CD4-positive, alpha-beta memory T cell (primary cell): ENCODE measurements at regions of chr1 and their contacts with region 1.

Region 1: GRCh38 chr1:201895913-201896807 is 7.5 kb downstream of the SHISA4 start:
- DNase-seq: peak; percentile 72 to 83 (median 75)
- H3K4me3 ChIP-seq: no peak overlapping the region
- H3K4me3 Mint-ChIP-seq: peak overlapping the region in 7 of 8 donors; percentile 28 to 74 (median 68)
- H3K27ac ChIP-seq: no peak overlapping the region
- H3K27ac Mint-ChIP-seq: peak overlapping the region; percentile 10 to 90 (median 74)
- H3K4me1 ChIP-seq: peaks cover 7% of the 10 kb centered on the region
- H3K4me1 Mint-ChIP-seq: peaks cover 5 to 7% (median 6%) of the 10 kb centered on the region in 4 donors
- H3K27me3 ChIP-seq: peaks cover under 1% of the 10 kb centered on the region
- H3K27me3 Mint-ChIP-seq: peaks cover 9 to 29% of the 10 kb centered on the region in 2 donors

Region 2: GRCh38 chr1:201748335-201748734 is 147.8 kb before region 1 on chr1:
- CTCF ChIA-PET with region 1: no interaction called
- POLR2A ChIA-PET with region 1: no interaction called
- intact Hi-C with region 1: no loop called
- DNase-seq: no peak
- H3K4me3 ChIP-seq: no peak overlapping the region
- H3K4me3 Mint-ChIP-seq: no peak overlapping the region
- H3K27ac ChIP-seq: no peak overlapping the region
- H3K27ac Mint-ChIP-seq: no peak overlapping the region
- H3K4me1 ChIP-seq: no peaks in the 10 kb centered on the region
- H3K4me1 Mint-ChIP-seq: peaks cover 2 to 12% (median 9%) of the 10 kb centered on the region in 4 donors
- H3K27me3 ChIP-seq: no peaks in the 10 kb centered on the region
- H3K27me3 Mint-ChIP-seq: peaks cover 2 to 3% of the 10 kb centered on the region in 2 donors

Region 3: DNA sequence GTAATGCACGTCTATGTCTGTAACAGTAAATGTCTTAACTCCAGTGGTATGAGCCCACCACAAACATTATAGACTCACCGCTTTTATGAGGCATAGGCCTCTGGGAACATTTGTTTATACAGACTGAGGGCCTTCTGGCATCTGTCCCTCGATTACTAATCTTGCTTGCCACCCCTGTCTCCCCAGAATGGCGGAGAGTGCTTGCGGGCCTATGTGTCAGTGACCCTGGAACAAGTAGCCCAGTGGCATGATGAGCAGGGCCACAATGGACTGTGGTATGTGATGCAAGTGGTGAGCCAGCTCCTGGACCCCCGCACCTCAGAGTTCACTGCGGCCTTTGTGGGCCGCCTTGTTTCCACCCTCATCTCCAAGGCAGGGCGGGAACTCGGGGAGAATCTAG is 25.8 kb before region 1 on chr1:
- CTCF ChIA-PET with region 1: interaction called, 11 read pairs
- POLR2A ChIA-PET with region 1: no interaction called
- intact Hi-C with region 1: no loop called
- DNase-seq: no peak
- H3K4me3 ChIP-seq: no peak overlapping the region
- H3K4me3 Mint-ChIP-seq: no peak overlapping the region
- H3K27ac ChIP-seq: no peak overlapping the region
- H3K27ac Mint-ChIP-seq: no peak overlapping the region
- H3K4me1 ChIP-seq: no peaks in the 10 kb centered on the region
- H3K4me1 Mint-ChIP-seq: no peaks in the 10 kb centered on the region
- H3K27me3 ChIP-seq: no peaks in the 10 kb centered on the region
- H3K27me3 Mint-ChIP-seq: no peaks in the 10 kb centered on the region

Region 4: GRCh38 chr1:201955009-201955728 is 59.0 kb after region 1 on chr1 and contains the start of gene TIMM17A:
- CTCF ChIA-PET with region 1: interaction called, 16 read pairs
- POLR2A ChIA-PET with region 1: interaction called, 5 read pairs
- intact Hi-C with region 1: loop called (anchors 1 kb)
- DNase-seq: peak; percentile 90 to 95 (median 90)
- H3K4me3 ChIP-seq: peak within 1 kb of the TSS; percentile 83 to 99
- H3K4me3 Mint-ChIP-seq: peak within 1 kb of the TSS; percentile 92 to 99 (median 98)
- H3K27ac ChIP-seq: peak within 1 kb of the TSS; percentile 83
- H3K27ac Mint-ChIP-seq: peak within 1 kb of the TSS; percentile 97 to 99 (median 98)
- H3K4me1 ChIP-seq: peaks cover 19% of the 10 kb centered on the region
- H3K4me1 Mint-ChIP-seq: peaks cover 12 to 30% (median 20%) of the 10 kb centered on the region in 4 donors
- H3K27me3 ChIP-seq: no peaks in the 10 kb centered on the region
- H3K27me3 Mint-ChIP-seq: no peaks in the 10 kb centered on the region
- total RNA-seq, gene TIMM17A: 26.0 to 27.1 TPM

Region 5: DNA sequence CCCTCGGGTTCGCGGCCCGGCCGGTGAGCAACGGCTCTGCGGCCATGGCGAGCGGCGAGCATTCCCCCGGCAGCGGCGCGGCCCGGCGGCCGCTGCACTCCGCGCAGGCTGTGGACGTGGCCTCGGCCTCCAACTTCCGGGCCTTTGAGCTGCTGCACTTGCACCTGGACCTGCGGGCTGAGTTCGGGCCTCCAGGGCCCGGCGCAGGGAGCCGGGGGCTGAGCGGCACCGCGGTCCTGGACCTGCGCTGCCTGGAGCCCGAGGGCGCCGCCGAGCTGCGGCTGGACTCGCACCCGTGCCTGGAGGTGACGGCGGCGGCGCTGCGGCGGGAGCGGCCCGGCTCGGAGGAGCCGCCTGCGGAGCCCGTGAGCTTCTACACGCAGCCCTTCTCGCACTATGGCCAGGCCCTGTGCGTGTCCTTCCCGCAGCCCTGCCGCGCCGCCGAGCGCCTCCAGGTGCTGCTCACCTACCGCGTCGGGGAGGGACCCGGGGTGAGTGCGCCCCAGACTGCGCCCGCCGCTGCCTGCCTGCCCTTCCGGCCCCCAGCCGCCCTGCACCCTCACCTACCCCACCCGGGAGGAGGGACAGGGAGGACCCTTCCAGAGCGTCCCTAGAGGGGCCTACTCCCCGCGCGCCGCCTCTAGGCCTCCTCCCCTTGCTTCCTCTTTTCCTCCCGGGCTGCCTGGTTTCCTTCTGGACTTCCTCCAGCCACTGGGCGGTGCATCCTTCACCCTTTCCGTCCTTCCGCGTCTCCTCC is 86.6 kb after region 1 on chr1 and contains the start of gene RNPEP:
- CTCF ChIA-PET with region 1: interaction called, 12 read pairs
- POLR2A ChIA-PET with region 1: interaction called, 6 read pairs
- intact Hi-C with region 1: no loop called
- DNase-seq: peak; percentile 50 to 71 (median 60)
- H3K4me3 ChIP-seq: peak within 1 kb of the TSS; percentile 52 to 77
- H3K4me3 Mint-ChIP-seq: peak within 1 kb of the TSS; percentile 92 to 100 (median 98)
- H3K27ac ChIP-seq: peak within 1 kb of the TSS; percentile 63
- H3K27ac Mint-ChIP-seq: peak within 1 kb of the TSS; percentile 81 to 98 (median 94)
- H3K4me1 ChIP-seq: peaks cover 17% of the 10 kb centered on the region
- H3K4me1 Mint-ChIP-seq: peaks cover 18 to 25% (median 22%) of the 10 kb centered on the region in 4 donors
- H3K27me3 ChIP-seq: no peaks in the 10 kb centered on the region
- H3K27me3 Mint-ChIP-seq: no peaks in the 10 kb centered on the region
- total RNA-seq, gene RNPEP: 25.9 to 29.1 TPM

Region 6: GRCh38 chr1:202135221-202135721 is 239.1 kb after region 1 on chr1:
- CTCF ChIA-PET with region 1: interaction called, 11 read pairs
- POLR2A ChIA-PET with region 1: no interaction called
- intact Hi-C with region 1: no loop called
- DNase-seq: peak; percentile 47 to 59 (median 58)
- H3K4me3 ChIP-seq: no peak overlapping the region
- H3K4me3 Mint-ChIP-seq: no peak overlapping the region
- H3K27ac ChIP-seq: no peak overlapping the region
- H3K27ac Mint-ChIP-seq: peak overlapping the region in 2 of 7 donors; percentile 14 to 70
- H3K4me1 ChIP-seq: peaks cover 7% of the 10 kb centered on the region
- H3K4me1 Mint-ChIP-seq: peaks cover 2 to 20% (median 4%) of the 10 kb centered on the region in 4 donors
- H3K27me3 ChIP-seq: no peaks in the 10 kb centered on the region
- H3K27me3 Mint-ChIP-seq: no peaks in the 10 kb centered on the region